Colonic mucosa (tissue), 4 donors: ENCODE measurements at regions of chr6 and their contacts with region 1.

Region 1: DNA sequence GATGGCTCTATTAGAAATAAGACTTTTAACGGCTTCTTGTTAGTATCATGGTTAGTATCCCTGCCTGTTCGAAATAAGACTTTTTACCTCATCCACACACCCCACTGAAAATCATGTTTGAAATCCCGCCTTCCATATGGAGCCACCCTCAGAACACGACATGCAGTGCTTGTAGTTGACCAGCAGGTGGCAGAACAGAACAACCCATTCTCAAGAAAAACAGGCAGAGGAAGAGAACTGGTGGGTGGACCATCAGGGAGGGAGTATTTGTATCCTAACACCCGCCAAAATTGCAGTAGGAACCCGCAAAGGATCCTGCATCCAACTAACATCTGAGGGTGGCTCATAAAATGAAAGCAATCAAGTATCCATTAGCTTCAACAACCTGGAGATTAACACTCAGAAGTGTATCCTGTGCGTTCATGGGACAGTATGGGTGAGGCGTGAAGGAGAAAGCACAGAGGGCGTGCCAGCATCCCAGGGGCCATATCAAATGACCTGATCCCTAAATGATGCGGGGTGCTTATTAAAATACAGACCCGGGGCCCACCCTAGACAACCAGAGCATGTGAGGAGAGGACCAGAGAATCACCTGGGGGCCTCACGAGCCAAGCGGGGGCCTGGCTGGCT is 89.6 kb upstream of the NHSL1 start:
- DNase-seq: peak; percentile 70
- H3K4me3 ChIP-seq: no peak overlapping the region
- H3K27ac ChIP-seq: no peak overlapping the region
- H3K4me1 ChIP-seq: peaks cover 5% of the 10 kb centered on the region
- H3K27me3 ChIP-seq: no peaks in the 10 kb centered on the region
- CTCF ChIP-seq: peak; percentile 93

Region 2: GRCh38 chr6:138517635-138518034 is 71.3 kb before region 1 on chr6:
- intact Hi-C with region 1: loop called (anchors 5 kb)
- DNase-seq: peak; percentile 73
- H3K4me3 ChIP-seq: no peak overlapping the region
- H3K27ac ChIP-seq: no peak overlapping the region
- H3K4me1 ChIP-seq: no peaks in the 10 kb centered on the region
- H3K27me3 ChIP-seq: no peaks in the 10 kb centered on the region
- CTCF ChIP-seq: peak; percentile 65

Region 3: GRCh38 chr6:138817822-138818308 is 228.9 kb after region 1 on chr6:
- intact Hi-C with region 1: no loop called
- DNase-seq: peak; percentile 94
- H3K4me3 ChIP-seq: no peak overlapping the region
- H3K27ac ChIP-seq: peak overlapping the region; percentile 54
- H3K4me1 ChIP-seq: peaks cover 5% of the 10 kb centered on the region
- H3K27me3 ChIP-seq: no peaks in the 10 kb centered on the region
- CTCF ChIP-seq: no peak